Thyroid gland (tissue), 4 donors: ENCODE measurements at regions of chr15 and their contacts with region 1.

Region 1: DNA sequence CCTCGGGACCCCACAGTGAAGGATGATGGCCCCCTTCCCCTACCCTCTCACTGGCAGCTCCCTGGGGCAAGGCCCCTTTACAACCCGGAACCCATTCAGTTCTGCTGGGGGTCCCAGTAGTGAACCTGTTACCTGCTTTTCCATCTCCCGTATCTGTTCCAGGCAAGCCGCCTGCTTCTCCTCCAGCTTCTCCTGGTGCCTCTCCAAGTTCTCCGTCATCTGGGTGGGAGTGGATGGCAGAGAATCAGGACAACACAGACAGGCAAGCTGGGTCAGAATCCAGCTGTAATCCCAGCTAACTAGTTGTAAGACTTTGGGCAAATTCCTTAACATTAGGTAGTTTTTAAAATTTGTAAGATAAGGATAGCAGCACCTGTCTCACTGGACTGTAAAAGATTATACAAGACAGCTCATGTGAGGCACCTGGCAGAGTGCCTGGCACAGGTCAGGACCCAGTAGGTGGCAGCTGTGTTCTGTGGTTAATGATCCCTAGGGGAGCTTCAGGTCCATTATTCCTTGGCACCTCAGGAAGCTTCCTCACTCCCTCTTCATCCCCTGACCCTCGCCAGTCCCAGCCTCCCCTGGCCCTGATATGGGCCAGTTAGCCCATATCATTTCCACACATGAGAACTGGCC is 6.4 kb upstream of the ANKRD63 start:
- DNase-seq: peak; percentile 88 to 90
- H3K4me3 ChIP-seq: no peak overlapping the region
- H3K27ac ChIP-seq: no peak overlapping the region
- H3K4me1 ChIP-seq: peaks cover 8 to 18% of the 10 kb centered on the region in 2 donors
- H3K27me3 ChIP-seq: no peaks in the 10 kb centered on the region
- CTCF ChIP-seq: peak in 3 of 6 experiments; percentile 23 to 40 (median 31)
- POLR2A ChIP-seq: no peak

Region 2: GRCh38 chr15:40323239-40323952 is 34.1 kb after region 1 on chr15 and contains the start of gene INAFM2:
- intact Hi-C with region 1: loop called (anchors 5 kb)
- DNase-seq: peak; percentile 96 to 97
- H3K4me3 ChIP-seq: peak within 1 kb of the TSS; percentile 42 to 64 (median 59)
- H3K27ac ChIP-seq: peak within 1 kb of the TSS; percentile 56 to 99 (median 99)
- H3K4me1 ChIP-seq: peaks cover 44 to 47% of the 10 kb centered on the region in 2 donors
- H3K27me3 ChIP-seq: no peaks in the 10 kb centered on the region
- CTCF ChIP-seq: peak; percentile 52 to 87 (median 62)
- POLR2A ChIP-seq: peak; percentile 84 to 98
- total RNA-seq, gene INAFM2: 47.5 to 86.9 (median 63.8) TPM